Right ventricle myocardium inferior (tissue), 1 donor: ENCODE measurements at regions of chr15 and their contacts with region 1.

Region 1: DNA sequence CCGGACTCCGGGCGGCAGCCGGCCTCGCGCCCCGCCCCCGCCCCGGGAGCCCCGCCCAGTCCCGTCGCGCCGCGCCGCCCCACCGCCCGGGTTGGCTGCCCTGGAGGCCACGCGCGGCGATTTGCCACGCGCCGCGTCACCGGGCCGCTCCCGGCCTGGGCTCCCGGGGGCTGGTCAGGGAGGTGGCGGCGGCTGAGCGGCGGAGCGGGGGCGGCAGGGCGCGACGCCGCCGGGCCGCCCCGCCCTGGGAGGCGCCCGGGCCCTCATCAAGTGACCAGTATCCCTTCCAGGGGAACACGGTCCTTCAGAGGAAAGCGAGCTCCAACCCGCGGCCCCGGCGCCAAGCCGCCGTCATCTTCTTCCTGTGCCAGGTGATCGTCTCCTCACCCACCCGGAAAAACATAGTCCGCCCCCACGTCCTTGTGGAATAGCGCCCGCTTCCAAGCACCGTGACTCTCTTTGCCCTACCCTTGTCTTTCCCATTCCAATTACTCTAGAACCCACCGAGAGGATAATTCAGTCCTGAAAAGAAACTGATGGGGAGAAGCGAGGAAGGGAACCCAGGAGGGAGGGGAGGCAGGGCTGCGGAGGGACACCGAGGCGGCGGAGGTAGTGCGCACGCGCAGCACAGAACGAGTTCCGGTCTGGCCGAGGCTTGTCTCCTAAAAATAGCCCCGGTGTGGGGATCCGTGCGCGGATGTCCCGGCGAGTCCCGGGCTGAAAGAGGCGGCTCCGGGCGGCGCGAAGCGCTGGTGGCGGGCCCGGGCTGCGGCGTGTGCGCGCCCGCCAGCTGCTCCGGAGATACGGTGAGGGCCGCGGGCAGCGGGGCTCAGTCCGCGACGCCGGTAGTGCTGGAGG is at the start of gene MEF2A:
- DNase-seq: peak; percentile 97
- ATAC-seq: peak; percentile 81
- total RNA-seq, gene MEF2A: 135 TPM

Region 2: GRCh38 chr15:99409097-99409473 is 156.4 kb before region 1 on chr15:
- intact Hi-C with region 1: loop called (anchors 2 kb)
- DNase-seq: no peak
- ATAC-seq: peak; percentile 86

Region 3: DNA sequence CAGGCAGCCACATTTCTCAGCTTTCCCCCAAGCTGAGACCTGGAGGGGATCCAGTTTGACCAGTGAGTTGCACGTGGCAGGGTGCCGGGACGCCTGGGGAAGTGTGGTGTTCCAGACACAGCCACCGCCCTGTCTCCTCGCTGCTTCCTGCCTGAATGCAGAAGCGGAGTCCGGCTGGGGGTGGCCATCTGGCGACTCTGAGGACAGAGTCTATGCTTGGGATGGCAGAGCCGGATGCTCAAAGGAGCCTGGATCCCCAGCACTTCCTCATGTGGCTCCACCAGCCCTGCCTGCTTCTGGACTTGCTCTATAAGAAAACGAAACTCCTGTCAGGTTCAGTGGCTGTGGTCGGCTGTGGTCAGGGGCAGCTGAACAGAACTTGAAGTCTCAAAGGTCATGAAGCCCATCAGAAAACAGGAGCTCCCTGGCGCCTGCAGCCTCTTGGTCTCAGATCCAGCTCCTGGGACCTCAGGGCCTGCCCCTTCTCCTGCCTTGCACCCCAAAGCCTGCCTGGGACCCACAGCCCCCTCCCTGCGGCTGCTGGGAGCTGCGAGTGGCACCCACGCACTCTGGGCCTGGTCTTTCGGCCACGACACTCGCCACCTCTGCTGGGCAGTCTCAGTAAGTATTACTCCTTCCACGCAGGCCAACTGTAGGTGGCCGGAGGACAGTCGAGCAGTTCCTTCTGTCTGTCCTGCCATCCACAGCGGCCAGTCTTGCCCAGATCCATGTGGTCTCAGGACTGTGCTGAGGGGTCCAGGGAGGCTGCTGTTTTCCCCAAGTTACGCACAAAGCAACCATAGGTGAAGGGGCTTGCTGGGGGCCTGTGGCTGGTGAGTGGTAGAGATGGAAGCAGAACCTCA is 112.5 kb before region 1 on chr15:
- intact Hi-C with region 1: loop called (anchors 1 kb)
- DNase-seq: peak; percentile 95
- ATAC-seq: peak; percentile 30

Region 4: DNA sequence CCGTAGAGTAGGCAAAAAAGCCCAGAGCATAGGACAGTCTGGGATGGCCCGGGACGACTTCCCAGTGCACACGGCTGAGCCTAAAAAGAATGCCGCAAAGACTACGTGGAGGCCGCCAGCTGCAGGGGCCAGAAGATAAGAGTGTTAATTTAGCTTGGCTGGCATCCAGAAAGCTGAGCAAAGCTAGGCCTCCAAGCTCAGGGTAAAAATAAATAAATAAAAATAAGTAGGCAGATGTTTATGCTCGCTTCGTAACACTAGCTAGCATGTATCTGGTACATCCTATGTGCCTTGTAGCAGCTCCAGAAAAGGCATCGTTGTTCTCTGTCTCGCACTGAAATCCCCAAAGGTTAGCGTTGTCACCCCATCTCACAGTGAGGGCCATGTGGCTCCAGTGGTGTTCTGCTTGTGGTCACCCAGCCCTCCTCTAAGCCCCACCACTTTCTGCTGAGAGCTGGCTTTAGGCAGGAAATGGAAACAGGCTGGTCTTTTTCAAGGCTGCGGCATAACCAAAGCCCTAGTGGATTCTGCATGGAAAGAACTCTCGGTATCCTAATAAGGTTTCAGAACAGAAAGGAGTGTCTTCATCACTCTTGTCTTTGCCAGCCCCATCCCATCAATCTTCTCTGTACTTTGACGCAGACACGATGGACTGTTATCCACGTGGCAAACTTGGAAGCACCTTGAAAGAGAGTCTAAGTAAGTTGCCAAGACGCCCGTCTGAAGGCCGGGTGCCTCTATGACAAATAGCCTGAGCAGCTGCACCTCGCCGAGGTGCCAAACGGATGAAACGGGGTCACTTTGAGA is 57.8 kb before region 1 on chr15:
- intact Hi-C with region 1: loop called (anchors 2 kb)
- DNase-seq: peak; percentile 85
- ATAC-seq: peak; percentile 86